Heart right ventricle (tissue), 16 donors: ENCODE measurements at regions of chr3 and their contacts with region 1.

Region 1: GRCh38 chr3:177777699-177778098 is 580.4 kb upstream of the TBL1XR1 start:
- DNase-seq: peak; percentile 22 to 46
- ATAC-seq: peak in 2 of 8 donors; percentile 25 to 51
- H3K4me3 ChIP-seq: no peak overlapping the region
- H3K27ac ChIP-seq: no peak overlapping the region
- H3K4me1 ChIP-seq: peaks cover 10 to 62% (median 36%) of the 10 kb centered on the region in 9 donors
- H3K27me3 ChIP-seq: no peaks in the 10 kb centered on the region
- CTCF ChIP-seq: peak; percentile 22 to 71 (median 57)

Region 2: DNA sequence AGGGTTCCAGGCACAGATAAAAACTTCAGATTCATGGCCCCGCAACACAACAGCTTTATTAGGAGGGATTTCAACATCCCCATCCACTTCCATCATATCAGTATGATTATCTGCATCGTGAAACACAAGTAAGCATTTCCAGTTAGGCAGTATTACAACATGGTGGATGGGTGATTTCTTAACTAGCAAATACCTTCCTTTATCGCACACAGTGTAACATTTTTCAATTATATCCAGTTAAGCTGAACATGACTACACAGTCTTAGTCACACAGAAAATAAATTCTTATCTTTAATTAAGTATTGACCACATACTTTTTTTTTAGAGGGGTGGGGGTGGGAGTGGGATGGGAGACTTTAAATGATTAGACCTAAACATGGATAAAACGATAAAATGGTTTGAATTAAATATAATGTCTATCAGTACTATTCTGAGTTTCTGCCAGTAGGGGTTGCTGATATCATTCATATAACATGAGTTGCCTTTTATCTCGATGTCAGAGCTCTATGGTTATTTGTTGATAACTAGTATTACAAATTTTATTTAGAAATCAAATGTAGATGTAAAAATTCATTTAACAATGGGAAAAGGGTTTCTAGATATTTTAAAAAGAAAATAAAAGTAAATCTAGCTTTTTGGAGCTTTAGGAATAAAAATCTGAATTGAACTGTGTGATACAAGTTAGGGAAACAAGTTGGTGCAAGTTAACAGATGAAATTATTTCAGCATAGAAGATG is 727.0 kb before region 1 on chr3:
- intact Hi-C with region 1: loop called in 3 of 10 experiments (anchors 1 to 10 kb)
- DNase-seq: no peak
- ATAC-seq: peak in 7 of 8 donors; percentile 48 to 87 (median 65)
- H3K4me3 ChIP-seq: no peak overlapping the region
- H3K27ac ChIP-seq: no peak overlapping the region
- H3K4me1 ChIP-seq: peaks cover 0 to 23% (median 15%) of the 10 kb centered on the region in 9 donors
- H3K27me3 ChIP-seq: no peaks in the 10 kb centered on the region
- CTCF ChIP-seq: peak in 8 of 9 donors; percentile 29 to 76 (median 62)

Region 3: DNA sequence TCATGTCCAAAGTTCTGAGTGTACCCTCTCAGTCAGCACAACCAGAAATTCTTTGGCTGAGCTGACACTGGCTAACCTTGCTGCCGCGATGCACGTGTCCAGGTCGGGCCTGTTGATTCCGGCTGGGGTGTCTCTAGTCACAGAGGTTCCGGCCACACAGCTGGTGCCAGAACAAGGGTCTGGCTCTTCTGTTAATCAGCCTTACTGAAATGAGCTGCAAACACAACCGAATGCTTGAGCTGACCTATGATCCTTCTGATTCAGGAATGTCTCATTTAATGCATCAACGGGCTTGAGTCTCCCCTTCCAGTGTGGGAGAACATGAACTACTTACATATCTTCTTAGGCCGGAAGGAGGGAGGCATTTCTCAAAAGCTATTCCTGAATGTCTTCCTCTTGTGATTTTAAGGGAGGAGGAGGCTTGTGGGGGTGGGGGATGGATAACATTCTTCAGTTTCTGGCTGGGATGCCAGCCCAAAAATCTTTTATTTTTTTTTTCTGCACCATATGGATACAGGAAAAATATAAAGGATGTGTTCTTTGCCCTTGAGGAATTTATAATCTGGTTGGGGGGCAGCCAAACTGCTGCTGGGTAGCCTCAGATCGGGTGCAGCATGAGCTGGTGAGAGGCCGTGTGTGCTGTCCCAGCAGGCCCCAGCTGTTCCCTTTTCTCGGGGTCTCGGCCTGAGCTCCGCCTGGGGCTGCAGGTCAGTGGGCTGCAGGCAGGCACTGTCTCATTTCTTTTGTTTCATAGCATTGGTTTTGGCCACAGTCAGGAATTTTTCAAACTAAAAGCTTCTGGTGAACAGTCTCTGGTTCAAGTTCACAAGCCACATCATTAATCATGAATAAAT is 261.3 kb before region 1 on chr3:
- intact Hi-C with region 1: loop called in 1 of 10 experiments (anchors 10 kb)
- DNase-seq: peak; percentile 43 to 56
- ATAC-seq: peak; percentile 63 to 93 (median 84)
- H3K4me3 ChIP-seq: no peak overlapping the region
- H3K27ac ChIP-seq: peak overlapping the region; percentile 18 to 83 (median 62)
- H3K4me1 ChIP-seq: peaks cover 6 to 57% (median 35%) of the 10 kb centered on the region in 9 donors
- H3K27me3 ChIP-seq: no peaks in the 10 kb centered on the region
- CTCF ChIP-seq: no peak

Region 4: GRCh38 chr3:177646749-177647148 is 130.9 kb before region 1 on chr3:
- intact Hi-C with region 1: no loop called
- DNase-seq: no peak
- ATAC-seq: no peak
- H3K4me3 ChIP-seq: no peak overlapping the region
- H3K27ac ChIP-seq: peak overlapping the region in 1 of 10 donors; percentile 42
- H3K4me1 ChIP-seq: peaks cover 0 to 23% (median 2%) of the 10 kb centered on the region in 9 donors
- H3K27me3 ChIP-seq: no peaks in the 10 kb centered on the region
- CTCF ChIP-seq: no peak

Region 5: DNA sequence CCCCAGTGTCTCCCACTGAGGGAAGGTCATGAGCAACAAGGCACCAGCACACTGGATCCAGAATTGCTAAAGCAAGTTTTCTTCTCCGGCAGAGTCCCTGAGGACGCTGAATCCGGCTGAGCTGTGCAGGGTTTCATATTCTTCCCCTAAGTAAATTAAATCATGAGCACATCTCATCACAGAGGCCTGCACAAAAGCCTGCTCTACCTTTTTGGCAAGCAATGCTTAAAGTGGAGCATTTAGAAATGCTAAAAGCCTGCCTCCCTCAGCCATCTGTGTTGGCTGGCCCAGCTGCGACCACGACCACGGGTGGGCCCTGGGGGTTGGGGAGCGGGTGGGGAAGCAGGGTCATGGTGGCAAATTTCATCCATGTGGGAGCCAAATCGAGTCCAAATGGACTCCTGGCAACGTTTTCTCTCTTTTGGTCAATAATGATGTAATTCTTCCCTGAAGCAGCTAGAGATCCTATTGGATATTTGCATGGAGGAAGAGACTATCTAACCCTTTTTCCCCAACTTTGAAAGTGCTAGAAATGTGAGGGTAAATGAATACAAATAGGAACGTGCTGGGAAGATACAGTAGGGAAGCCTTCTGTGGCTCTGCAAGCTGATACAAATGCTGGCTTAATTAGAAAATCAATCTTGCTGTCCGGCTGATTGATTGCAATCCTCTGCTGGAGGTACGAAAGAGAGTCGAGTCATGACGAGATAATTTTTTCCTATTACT is 47.6 kb before region 1 on chr3:
- intact Hi-C with region 1: loop called in 2 of 10 experiments (anchors 5 kb)
- DNase-seq: peak; percentile 41 to 69
- ATAC-seq: peak; percentile 85 to 93 (median 88)
- H3K4me3 ChIP-seq: no peak overlapping the region
- H3K27ac ChIP-seq: peak overlapping the region in 6 of 10 donors; percentile 11 to 59 (median 33)
- H3K4me1 ChIP-seq: peaks cover 0 to 37% (median 15%) of the 10 kb centered on the region in 9 donors
- H3K27me3 ChIP-seq: no peaks in the 10 kb centered on the region
- CTCF ChIP-seq: no peak

Region 6: GRCh38 chr3:178518660-178519396 is 741.1 kb after region 1 on chr3:
- intact Hi-C with region 1: no loop called
- DNase-seq: no peak
- ATAC-seq: peak in 1 of 8 donors; percentile 73
- H3K4me3 ChIP-seq: no peak overlapping the region
- H3K27ac ChIP-seq: peak overlapping the region in 1 of 10 donors; percentile 4
- H3K4me1 ChIP-seq: peaks cover 0 to 21% (median 3%) of the 10 kb centered on the region in 9 donors
- H3K27me3 ChIP-seq: no peaks in the 10 kb centered on the region
- CTCF ChIP-seq: no peak